Activated CD4-positive, alpha-beta memory T cell treated with anti-CD3 and anti-CD28 coated beads, Interleukin-2, amount 10 ng/mL, durations not matched to agents 7 days and 5 days (primary cell): ENCODE measurements at regions of chr6 and their contacts with region 1.

Region 1: DNA sequence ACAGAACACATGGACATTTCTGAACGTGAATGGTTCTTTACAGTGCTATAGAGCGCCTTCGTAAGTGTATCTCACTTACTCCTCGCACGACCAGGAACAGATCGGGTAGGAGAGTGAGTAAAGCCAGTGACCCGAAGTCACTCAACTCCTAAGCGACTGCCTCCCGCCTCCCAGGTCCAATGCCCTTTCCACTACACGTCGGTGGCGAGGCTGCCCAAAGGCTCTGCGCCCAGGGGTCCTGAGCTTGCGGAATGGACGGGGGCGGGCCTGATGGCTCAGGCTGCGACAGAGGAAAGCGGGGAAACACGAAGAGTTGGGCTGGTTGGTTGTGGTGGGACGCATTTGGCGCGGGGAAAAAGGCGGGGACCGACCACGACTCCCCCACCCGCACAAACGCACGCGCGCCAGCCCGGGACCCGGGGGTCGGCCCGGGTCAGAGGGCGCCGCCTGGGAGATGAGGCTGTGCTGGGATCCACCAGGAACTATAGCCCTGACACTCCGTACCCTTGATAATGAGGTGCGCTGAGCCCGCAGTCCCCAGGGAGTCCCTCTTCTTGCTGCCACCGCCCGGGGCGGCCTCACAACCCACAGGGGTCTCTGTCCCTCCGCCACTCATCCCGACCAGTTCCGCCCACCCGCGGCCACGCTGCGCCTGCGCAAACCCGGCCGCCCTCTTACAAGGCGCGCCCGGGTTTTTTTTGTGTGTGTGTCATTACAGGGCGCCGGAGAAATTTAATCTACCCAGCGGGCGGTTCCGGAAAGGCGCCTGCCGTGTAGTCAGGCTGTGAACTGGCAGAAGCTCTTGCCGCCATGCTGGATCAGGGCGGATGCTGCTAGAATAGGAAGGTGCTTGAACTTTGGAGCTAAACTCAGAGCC is at the start of gene BLOC1S5:
- DNase-seq: peak; percentile 97
- H3K4me3 Mint-ChIP-seq: peak within 1 kb of the TSS; percentile 97
- H3K27ac Mint-ChIP-seq: peak within 1 kb of the TSS; percentile 89
- H3K4me1 Mint-ChIP-seq: peaks cover 42% of the 10 kb centered on the region
- H3K27me3 Mint-ChIP-seq: no peaks in the 10 kb centered on the region
- total RNA-seq, gene BLOC1S5: 22.8 to 23.4 TPM

Region 2: GRCh38 chr6:7725849-7726415 is 338.1 kb before region 1 on chr6 and contains the start of gene BMP6:
- CTCF ChIA-PET with region 1: interaction called, 30 read pairs
- POLR2A ChIA-PET with region 1: no interaction called
- DNase-seq: peak; percentile 71
- H3K4me3 Mint-ChIP-seq: peak within 1 kb of the TSS; percentile 67
- H3K27ac Mint-ChIP-seq: no peak within 1 kb of the TSS
- H3K4me1 Mint-ChIP-seq: peaks cover 18% of the 10 kb centered on the region
- H3K27me3 Mint-ChIP-seq: peaks cover 76% of the 10 kb centered on the region
- total RNA-seq, gene BMP6: not detected

Region 3: DNA sequence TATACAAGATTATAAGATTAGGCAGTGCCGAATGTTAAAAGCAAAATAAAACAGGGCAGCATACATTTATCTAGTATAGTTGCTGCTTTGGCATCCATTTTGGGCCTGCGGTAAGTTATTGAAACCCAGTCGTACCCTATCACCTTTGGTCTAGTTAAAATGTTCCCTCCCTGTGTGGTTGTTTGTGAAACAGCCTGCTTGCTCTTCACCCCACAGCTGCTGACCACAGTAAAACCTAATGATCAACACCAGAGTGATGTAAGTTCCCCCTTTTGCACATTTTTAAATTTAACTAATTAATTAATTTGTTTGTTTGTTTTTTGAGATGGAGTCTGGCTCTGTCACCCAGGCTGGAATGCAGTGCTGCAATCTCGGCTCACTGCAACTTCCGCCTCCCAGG is 103.2 kb before region 1 on chr6:
- CTCF ChIA-PET with region 1: no interaction called
- POLR2A ChIA-PET with region 1: no interaction called
- DNase-seq: no peak
- H3K4me3 Mint-ChIP-seq: no peak overlapping the region
- H3K27ac Mint-ChIP-seq: no peak overlapping the region
- H3K4me1 Mint-ChIP-seq: peaks cover 5% of the 10 kb centered on the region
- H3K27me3 Mint-ChIP-seq: peaks cover 7% of the 10 kb centered on the region

Region 4: GRCh38 chr6:8102122-8102958 is 38.3 kb after region 1 on chr6 and contains the start of gene EEF1E1:
- CTCF ChIA-PET with region 1: interaction called, 16 read pairs
- POLR2A ChIA-PET with region 1: interaction called, 72 read pairs
- DNase-seq: peak; percentile 97
- H3K4me3 Mint-ChIP-seq: peak within 1 kb of the TSS; percentile 94
- H3K27ac Mint-ChIP-seq: peak within 1 kb of the TSS; percentile 91
- H3K4me1 Mint-ChIP-seq: peaks cover 39% of the 10 kb centered on the region
- H3K27me3 Mint-ChIP-seq: peaks cover 13% of the 10 kb centered on the region
- total RNA-seq, gene EEF1E1: 29.8 to 30.0 TPM